Ovary (tissue), 10 donors: ENCODE measurements at regions of chr5 and their contacts with region 1.

Region 1: DNA sequence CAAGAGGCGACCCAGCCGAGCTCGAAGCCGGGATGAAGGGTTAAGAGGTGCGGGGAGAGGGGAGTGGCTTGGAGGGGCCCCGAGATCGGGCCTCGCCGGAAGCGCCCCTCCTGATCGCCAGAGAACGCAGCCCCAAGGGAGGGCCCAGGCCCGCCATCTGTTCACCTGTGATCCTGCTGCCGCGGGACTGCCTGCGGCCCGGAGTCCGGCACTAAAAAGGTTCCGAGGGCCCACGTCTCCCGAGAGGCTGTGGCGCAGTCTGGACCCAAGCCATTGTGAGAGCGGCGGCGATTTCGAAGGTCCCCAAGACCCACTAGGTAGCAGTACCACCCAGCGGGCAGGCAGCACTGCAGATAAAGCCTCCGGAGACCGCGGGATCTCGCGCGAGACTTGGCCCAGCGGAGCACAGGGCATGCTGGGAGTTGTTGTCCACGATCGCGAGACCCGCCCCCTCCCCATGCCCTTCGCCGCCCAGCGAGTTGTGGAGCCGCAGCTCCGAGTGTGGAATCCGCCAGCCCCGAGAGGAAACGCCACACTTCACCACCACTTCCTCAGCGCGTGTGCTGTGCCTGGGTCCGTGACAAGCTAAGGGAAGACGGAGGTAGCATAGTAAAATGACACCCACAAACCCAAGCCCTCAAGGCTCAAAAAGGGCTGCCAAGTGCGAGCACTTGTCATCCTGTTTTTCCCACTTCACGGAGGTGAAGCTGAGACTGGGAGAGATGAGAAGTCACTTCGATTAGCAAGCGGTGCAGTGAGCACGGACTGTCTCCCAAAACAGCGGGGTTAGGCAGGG is at the start of gene KIAA1191:
- DNase-seq: peak; percentile 93 to 96 (median 94)
- H3K4me3 ChIP-seq: peak within 1 kb of the TSS; percentile 74
- H3K27ac ChIP-seq: peak within 1 kb of the TSS; percentile 45 to 85
- H3K4me1 ChIP-seq: peaks cover 7% of the 10 kb centered on the region
- H3K27me3 ChIP-seq: no peaks in the 10 kb centered on the region
- CTCF ChIP-seq: no peak
- EP300 ChIP-seq: no peak
- POLR2A ChIP-seq: peak; percentile 83
- total RNA-seq, gene KIAA1191: 95.3 to 149 (median 116) TPM

Region 2: GRCh38 chr5:176178789-176179188 is 182.8 kb before region 1 on chr5:
- intact Hi-C with region 1: loop called in 1 of 4 experiments (anchors 10 kb)
- DNase-seq: no peak
- H3K4me3 ChIP-seq: no peak overlapping the region
- H3K27ac ChIP-seq: no peak overlapping the region
- H3K4me1 ChIP-seq: peaks cover 22% of the 10 kb centered on the region
- H3K27me3 ChIP-seq: no peaks in the 10 kb centered on the region
- CTCF ChIP-seq: no peak
- EP300 ChIP-seq: no peak
- POLR2A ChIP-seq: no peak

Region 3: DNA sequence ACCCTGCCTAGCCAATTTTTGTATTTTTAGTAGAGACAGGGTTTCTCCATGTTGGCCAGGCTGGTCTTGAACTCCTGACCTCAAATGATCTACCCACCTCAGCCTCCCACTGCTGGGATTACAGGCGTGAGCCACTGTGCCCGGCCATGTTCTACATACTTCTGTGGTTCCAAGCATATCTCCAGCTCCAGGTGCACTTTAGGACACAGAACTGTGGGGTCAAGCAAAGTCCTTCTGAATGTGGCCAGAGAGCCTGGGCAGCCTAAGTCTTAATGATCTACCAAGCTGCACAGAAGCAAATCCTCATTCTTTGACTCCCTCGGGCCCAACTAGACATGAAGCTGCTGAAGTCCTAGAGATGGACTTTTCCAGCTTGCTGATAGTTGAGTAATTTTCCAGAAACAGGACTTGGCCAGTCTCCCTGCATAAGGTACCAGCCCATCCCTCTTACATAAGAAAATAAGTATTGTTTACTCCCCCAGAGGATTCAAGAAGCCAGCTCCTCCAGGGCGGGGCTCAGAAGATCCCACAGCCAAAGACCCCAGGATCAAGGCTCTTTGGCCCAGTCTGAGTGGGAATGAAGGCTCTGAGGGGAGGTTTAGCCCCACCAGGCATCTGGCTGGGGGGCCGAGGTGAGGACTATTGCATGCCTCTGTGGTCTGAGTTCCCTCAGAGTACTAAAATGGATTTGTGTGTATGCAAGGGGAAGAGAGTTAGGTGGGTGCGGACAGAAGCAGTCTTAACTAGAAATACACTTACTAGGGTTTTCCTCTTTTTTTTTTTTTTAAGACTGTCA is 46.0 kb after region 1 on chr5:
- intact Hi-C with region 1: loop called in 1 of 4 experiments (anchors 2 kb)
- DNase-seq: peak in 3 of 5 donors; percentile 56 to 70 (median 64)
- H3K4me3 ChIP-seq: no peak overlapping the region
- H3K27ac ChIP-seq: no peak overlapping the region
- H3K4me1 ChIP-seq: peaks cover 3% of the 10 kb centered on the region
- H3K27me3 ChIP-seq: no peaks in the 10 kb centered on the region
- CTCF ChIP-seq: no peak
- EP300 ChIP-seq: no peak
- POLR2A ChIP-seq: no peak

Region 4: DNA sequence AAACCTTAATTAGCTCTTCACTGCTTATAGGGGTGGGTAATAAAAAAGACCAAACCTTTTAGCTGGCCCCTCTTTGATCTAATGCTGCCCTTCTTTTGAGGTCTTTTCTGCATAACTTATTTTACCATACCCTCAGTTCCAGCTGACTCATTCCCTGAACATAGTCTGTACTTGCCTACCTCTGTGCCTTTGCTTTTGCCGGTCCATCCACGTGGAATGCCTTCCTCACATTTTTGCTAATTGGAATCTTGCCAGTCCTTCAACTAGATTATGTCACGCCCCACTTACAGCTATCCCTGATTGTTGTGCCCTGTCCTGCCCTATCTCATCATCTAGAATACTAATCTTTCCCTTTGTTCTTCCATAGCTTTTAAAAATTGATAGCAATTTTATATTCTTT is 130.8 kb after region 1 on chr5:
- intact Hi-C with region 1: no loop called
- DNase-seq: no peak
- H3K4me3 ChIP-seq: no peak overlapping the region
- H3K27ac ChIP-seq: no peak overlapping the region
- H3K4me1 ChIP-seq: no peaks in the 10 kb centered on the region
- H3K27me3 ChIP-seq: no peaks in the 10 kb centered on the region
- CTCF ChIP-seq: no peak
- EP300 ChIP-seq: no peak
- POLR2A ChIP-seq: no peak